ENCODE measurements at regions of chr1 and their contacts with region 1.

Region 1: DNA sequence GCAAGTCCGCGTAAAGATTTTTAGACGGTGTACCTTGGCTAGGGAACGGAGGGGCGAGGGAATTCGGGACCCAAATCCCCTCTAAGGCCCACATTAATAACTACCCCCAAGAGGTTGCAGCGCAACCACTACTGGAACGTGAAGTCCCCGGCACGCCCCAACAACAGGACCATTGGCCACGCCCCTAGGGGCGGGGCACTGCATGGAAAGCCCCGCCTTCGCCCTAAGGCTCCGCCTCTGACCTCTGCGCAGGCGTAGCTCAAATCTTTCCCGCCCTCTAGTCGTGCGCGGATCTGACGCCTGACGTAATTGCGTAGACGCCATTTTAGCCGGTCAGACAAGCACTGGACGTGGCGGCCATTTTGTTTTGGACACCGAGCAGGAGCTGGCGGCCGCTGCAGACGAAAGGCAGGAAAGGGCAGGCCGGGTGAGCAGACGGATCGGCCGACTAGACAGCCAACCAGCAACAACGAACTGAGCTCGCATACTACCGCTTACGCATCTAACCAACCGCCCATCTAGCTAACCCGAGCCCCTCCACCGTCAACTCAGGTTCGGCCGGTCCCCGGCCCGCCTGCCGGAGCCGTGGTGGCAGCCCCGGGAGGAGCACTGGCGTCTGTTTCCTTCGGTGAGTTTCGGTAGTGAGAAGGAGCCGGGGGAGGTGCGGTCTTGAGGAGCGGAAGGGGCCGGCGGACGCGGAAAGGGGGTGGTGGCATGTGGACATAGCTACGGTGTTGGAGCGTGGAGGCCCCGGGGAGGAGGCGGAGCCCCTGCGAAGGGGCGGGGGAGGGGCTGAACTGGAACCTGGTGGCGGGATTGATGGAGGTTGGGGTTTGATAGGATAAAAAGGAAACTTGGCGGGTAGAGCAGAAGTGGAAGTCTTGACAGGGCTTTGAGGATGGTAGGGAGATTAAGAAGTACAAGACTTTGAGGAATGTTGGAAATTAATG is at the start of gene CHTOP:
- DNase-seq: peak; percentile 95
- ATAC-seq: peak; percentile 81
- H3K4me3 ChIP-seq: peak within 1 kb of the TSS; percentile 87 to 97 (median 96)
- H3K27ac ChIP-seq: peak within 1 kb of the TSS; percentile 100
- H3K4me1 ChIP-seq: peaks cover 67% of the 10 kb centered on the region
- H3K27me3 ChIP-seq: no peaks in the 10 kb centered on the region
- CTCF ChIP-seq: no peak
- EP300 ChIP-seq: 0 out of 4 replicates have a peak, but pooled peaks of 1 of the 2 experiments have one; percentile 46
- POLR2A ChIP-seq: peak; percentile 85
- RAD21 ChIP-seq: no peak
- total RNA-seq, gene CHTOP: 35.4 and 38.0 TPM in 2 replicates

Region 2: DNA sequence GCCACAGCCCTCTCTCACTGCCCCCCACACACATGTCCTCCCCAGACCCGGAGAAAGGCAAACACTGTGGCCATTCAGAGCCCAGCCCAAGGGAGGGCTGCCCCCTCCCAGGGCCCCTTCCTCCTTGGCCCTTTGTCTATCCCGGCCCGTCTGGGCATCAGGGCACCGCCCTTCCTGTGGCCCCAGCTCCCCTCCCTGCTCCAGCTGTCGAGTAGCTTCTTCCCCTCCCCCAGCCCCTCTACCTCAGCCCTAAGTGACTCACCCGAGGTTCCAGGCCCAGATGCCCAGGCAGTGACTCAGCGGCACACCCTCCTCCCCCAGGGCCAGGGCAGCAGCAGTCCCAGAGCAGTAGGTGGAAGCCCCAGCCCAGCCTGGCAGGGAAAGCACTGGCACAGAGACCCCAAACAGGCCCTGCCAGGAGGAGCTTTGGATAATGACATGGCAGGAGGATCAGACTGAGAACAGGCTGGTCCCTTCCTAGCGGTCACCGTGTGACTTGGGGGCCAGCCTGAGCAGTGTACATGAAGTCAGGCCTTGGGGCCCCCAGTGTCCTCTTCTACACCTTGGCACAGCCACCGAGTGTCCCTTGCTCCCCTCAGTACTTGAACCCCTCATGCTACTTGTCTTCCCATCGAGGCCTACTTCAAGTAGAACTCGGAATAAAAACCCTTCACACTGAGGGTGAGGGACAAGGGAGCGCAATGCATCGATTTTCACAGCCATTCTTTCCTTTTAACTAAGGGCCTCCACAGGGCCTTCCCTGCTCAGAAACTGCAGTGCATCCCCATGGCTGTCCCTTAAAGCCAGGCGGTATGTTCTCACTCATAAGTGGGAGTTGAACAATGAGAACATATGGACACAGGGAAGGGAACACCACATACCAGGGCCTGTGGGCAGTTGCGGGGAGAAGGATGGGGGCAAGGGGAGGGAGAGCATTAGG is 67.3 kb before region 1 on chr1:
- CTCF ChIA-PET with region 1: no interaction called
- POLR2A ChIA-PET with region 1: interaction called, 17 read pairs
- in situ Hi-C with region 1: loop called (anchors 5 kb)
- intact Hi-C with region 1: no loop called
- DNase-seq: peak; percentile 89
- ATAC-seq: peak; percentile 82
- H3K4me3 ChIP-seq: peak overlapping the region in 1 of 3 experiments; percentile 48; a peak in 2 of 6 replicates
- H3K27ac ChIP-seq: peak overlapping the region; percentile 35
- H3K4me1 ChIP-seq: peaks cover 54% of the 10 kb centered on the region
- H3K27me3 ChIP-seq: no peaks in the 10 kb centered on the region
- CTCF ChIP-seq: no peak; the same call in 1 of the 2 replicates
- EP300 ChIP-seq: peak in 1 of 2 experiments; percentile 73; a peak in 2 of 4 replicates
- POLR2A ChIP-seq: no peak
- RAD21 ChIP-seq: no peak

Region 3: GRCh38 chr1:153608742-153609584 is 25.0 kb before region 1 on chr1:
- CTCF ChIA-PET with region 1: no interaction called
- POLR2A ChIA-PET with region 1: interaction called, 390 read pairs
- in situ Hi-C with region 1: no loop called
- intact Hi-C with region 1: no loop called
- DNase-seq: peak; percentile 96
- ATAC-seq: peak; percentile 82
- H3K4me3 ChIP-seq: peak overlapping the region; percentile 62 to 83 (median 64)
- H3K27ac ChIP-seq: peak overlapping the region; percentile 99
- H3K4me1 ChIP-seq: peaks cover 61% of the 10 kb centered on the region
- H3K27me3 ChIP-seq: no peaks in the 10 kb centered on the region; a peak in 1 of 5 replicates
- CTCF ChIP-seq: no peak
- EP300 ChIP-seq: peak; percentile 14 to 55; a peak in 3 of 4 replicates
- POLR2A ChIP-seq: peak; percentile 82 to 91
- RAD21 ChIP-seq: 0 out of 2 replicates have a peak, but pooled peaks have one; percentile 11

Region 4: GRCh38 chr1:153617675-153618074 is 16.3 kb before region 1 on chr1:
- CTCF ChIA-PET with region 1: no interaction called
- POLR2A ChIA-PET with region 1: interaction called, 390 read pairs
- in situ Hi-C with region 1: no loop called
- intact Hi-C with region 1: no loop called
- DNase-seq: no peak
- ATAC-seq: no peak
- H3K4me3 ChIP-seq: no peak overlapping the region
- H3K27ac ChIP-seq: no peak overlapping the region
- H3K4me1 ChIP-seq: peaks cover 46% of the 10 kb centered on the region
- H3K27me3 ChIP-seq: no peaks in the 10 kb centered on the region
- CTCF ChIP-seq: no peak
- EP300 ChIP-seq: no peak
- POLR2A ChIP-seq: no peak
- RAD21 ChIP-seq: no peak

Region 5: GRCh38 chr1:153649863-153650235 is 15.9 kb after region 1 on chr1:
- CTCF ChIA-PET with region 1: no interaction called
- POLR2A ChIA-PET with region 1: interaction called, 40 read pairs
- in situ Hi-C with region 1: no loop called
- intact Hi-C with region 1: no loop called
- DNase-seq: no peak
- ATAC-seq: peak; percentile 52
- H3K4me3 ChIP-seq: no peak overlapping the region
- H3K27ac ChIP-seq: no peak overlapping the region
- H3K4me1 ChIP-seq: peaks cover 23% of the 10 kb centered on the region
- H3K27me3 ChIP-seq: no peaks in the 10 kb centered on the region
- CTCF ChIP-seq: no peak
- EP300 ChIP-seq: no peak
- POLR2A ChIP-seq: no peak
- RAD21 ChIP-seq: no peak

Region 6: GRCh38 chr1:153670859-153671627 is 37.1 kb after region 1 on chr1 and contains the start of gene ILF2:
- CTCF ChIA-PET with region 1: no interaction called
- POLR2A ChIA-PET with region 1: interaction called, 9 read pairs
- in situ Hi-C with region 1: no loop called
- intact Hi-C with region 1: loop called (anchors 5 kb)
- DNase-seq: peak; percentile 99
- ATAC-seq: peak; percentile 96
- H3K4me3 ChIP-seq: peak within 1 kb of the TSS; percentile 65 to 92 (median 83)
- H3K27ac ChIP-seq: peak within 1 kb of the TSS; percentile 90
- H3K4me1 ChIP-seq: peaks cover 29% of the 10 kb centered on the region
- H3K27me3 ChIP-seq: no peaks in the 10 kb centered on the region; a peak in 1 of 5 replicates
- CTCF ChIP-seq: peak; percentile 65
- EP300 ChIP-seq: peak in 1 of 2 experiments; percentile 36; a peak in 1 of 4 replicates
- POLR2A ChIP-seq: peak; percentile 89 to 94
- RAD21 ChIP-seq: no peak
- total RNA-seq, gene ILF2: 366 and 491 TPM in 2 replicates

Region 7: DNA sequence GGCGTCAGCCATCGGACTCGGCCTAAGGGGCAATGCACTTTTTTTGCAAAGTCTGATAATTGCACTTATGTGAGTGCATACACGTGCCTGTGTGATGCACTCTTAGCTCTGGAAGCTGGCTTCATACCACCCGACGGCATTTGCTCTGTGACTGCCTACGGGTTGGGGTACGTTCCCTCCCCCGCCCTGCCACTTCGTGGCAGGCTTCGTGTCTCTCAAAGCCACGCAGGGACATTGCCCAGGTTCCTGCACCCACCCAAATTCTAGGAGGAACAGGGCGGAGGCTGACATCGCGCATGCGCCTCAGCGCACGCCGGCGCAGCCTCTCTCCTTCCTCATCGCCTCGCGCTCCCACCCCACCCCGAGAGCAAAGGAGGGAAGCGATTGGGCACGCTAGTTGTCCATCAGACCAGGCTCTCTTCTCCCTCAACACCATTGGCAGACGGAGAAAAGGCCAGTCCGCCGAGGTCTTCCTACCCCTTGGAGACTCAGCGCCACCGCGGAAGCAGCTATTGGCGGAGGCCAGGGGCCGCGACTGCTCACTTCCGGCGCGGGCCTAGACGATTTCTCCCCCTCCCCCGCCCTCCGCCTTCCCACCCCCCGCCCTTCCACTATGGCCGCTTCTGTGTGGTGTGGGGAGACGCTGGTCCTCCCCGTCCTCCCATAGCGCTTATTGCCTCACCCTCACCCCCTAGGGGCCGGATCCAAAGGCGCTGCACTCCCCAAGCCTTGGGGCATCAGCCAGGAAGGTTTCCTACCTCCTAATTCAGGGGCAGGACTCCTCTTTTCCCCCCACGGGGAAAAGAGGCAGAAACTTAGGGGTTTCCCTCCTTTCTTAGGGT is 93.7 kb after region 1 on chr1 and contains the start of gene INTS3:
- CTCF ChIA-PET with region 1: no interaction called
- POLR2A ChIA-PET with region 1: interaction called, 14 read pairs
- in situ Hi-C with region 1: no loop called
- intact Hi-C with region 1: no loop called
- DNase-seq: peak; percentile 99
- ATAC-seq: peak; percentile 99
- H3K4me3 ChIP-seq: peak within 1 kb of the TSS; percentile 89 to 95 (median 92)
- H3K27ac ChIP-seq: peak within 1 kb of the TSS; percentile 95
- H3K4me1 ChIP-seq: peaks cover 46% of the 10 kb centered on the region
- H3K27me3 ChIP-seq: no peaks in the 10 kb centered on the region; a peak in 1 of 5 replicates
- CTCF ChIP-seq: no peak
- EP300 ChIP-seq: no peak
- POLR2A ChIP-seq: peak; percentile 73 to 76
- RAD21 ChIP-seq: no peak
- total RNA-seq, gene INTS3: 14.7 and 17.2 TPM in 2 replicates